Adrenal gland (tissue), 19 donors: ENCODE measurements at regions of chr16 and their contacts with region 1.

Region 1: DNA sequence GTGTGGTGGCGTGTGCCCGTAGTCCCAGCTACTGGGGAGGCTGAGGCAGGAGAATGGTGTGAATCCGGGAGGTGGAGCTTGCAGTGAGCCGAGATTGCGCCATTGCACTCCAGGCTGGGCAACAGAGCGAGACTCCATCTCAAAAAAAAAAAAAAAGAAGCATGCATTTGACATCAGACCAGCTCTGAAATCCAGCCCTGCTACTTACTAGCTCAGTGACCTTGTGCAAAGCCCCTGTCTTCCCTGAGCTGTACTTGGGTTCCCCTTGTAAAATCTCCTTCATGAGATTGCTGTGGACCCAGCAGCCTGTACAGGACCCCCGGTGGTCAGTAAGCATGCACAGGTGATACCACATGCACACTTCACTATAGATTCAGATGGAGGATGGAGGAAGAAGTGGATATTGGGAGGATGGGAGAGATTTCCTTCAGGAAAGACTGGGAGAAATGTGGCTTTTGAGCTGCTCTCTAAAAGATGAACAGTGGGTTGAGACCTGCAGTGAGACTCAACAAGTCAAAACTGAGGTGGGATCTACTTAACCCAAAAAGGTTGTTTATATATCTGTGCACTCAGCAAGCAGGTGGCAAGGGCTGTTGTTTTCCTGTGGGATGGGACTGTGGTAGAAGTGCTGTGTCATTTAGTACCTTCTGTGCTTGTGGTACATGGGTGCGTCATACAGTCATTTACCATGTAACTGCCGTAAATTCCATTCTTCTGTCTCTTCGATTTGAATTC is 6.6 kb downstream of the HERPUD1 start:
- DNase-seq: no peak
- H3K4me3 ChIP-seq: no peak overlapping the region
- H3K27ac ChIP-seq: no peak overlapping the region
- H3K4me1 ChIP-seq: peaks cover 13 to 41% of the 10 kb centered on the region in 2 donors
- H3K27me3 ChIP-seq: no peaks in the 10 kb centered on the region
- CTCF ChIP-seq: no peak
- POLR2A ChIP-seq: no peak

Region 2: GRCh38 chr16:56990407-56991286 is 52.1 kb after region 1 on chr16:
- intact Hi-C with region 1: loop called in 1 of 2 experiments (anchors 5 kb)
- DNase-seq: peak in 1 of 7 donors; percentile 3
- H3K4me3 ChIP-seq: peak overlapping the region in 2 of 4 donors; percentile 87 to 98
- H3K27ac ChIP-seq: peak overlapping the region in 3 of 5 donors; percentile 82 to 93 (median 90)
- H3K4me1 ChIP-seq: peaks cover 25 to 34% of the 10 kb centered on the region in 2 donors
- H3K27me3 ChIP-seq: no peaks in the 10 kb centered on the region
- CTCF ChIP-seq: no peak
- POLR2A ChIP-seq: no peak